K562 (cell line): ENCODE measurements at regions of chr7 and their contacts with region 1.

Region 1: GRCh38 chr7:104923010-104923421 is 91.0 kb upstream of the KMT2E start:
- DNase-seq: peak; percentile 54 to 93 (median 68)
- ATAC-seq: peak; percentile 98
- H3K4me3 ChIP-seq: no peak overlapping the region
- H3K27ac ChIP-seq: no peak overlapping the region
- H3K4me1 ChIP-seq: peaks cover 0 to 5% of the 10 kb centered on the region in 2 experiments; a peak in 2 of 5 replicates
- H3K27me3 ChIP-seq: no peaks in the 10 kb centered on the region
- CTCF ChIP-seq: peak; percentile 91 to 98 (median 95)
- EP300 ChIP-seq: peak; percentile 51
- POLR2A ChIP-seq: no peak
- RAD21 ChIP-seq: peak; percentile 94 to 99

Region 2: GRCh38 chr7:103573479-103574058 is 1349.4 kb before region 1 on chr7:
- CTCF ChIA-PET with region 1: no interaction called
- POLR2A ChIA-PET with region 1: no interaction called
- in situ Hi-C with region 1: loop called (anchors 25 kb)
- intact Hi-C with region 1: no loop called
- DNase-seq: peak; percentile 29 to 48 (median 34)
- ATAC-seq: peak; percentile 46; the same call in 1 of the 3 replicates
- H3K4me3 ChIP-seq: no peak overlapping the region
- H3K27ac ChIP-seq: no peak overlapping the region
- H3K4me1 ChIP-seq: no peaks in the 10 kb centered on the region
- H3K27me3 ChIP-seq: no peaks in the 10 kb centered on the region
- CTCF ChIP-seq: peak in 2 of 3 experiments; percentile 50 to 82; a peak in 3 of 6 replicates
- EP300 ChIP-seq: no peak
- POLR2A ChIP-seq: no peak
- RAD21 ChIP-seq: peak; percentile 90 to 95

Region 3: GRCh38 chr7:104341546-104341945 is 581.5 kb before region 1 on chr7:
- CTCF ChIA-PET with region 1: no interaction called
- POLR2A ChIA-PET with region 1: no interaction called
- in situ Hi-C with region 1: no loop called
- intact Hi-C with region 1: loop called (anchors 5 kb)
- DNase-seq: peak; percentile 10 to 44 (median 24)
- ATAC-seq: peak; percentile 85
- H3K4me3 ChIP-seq: no peak overlapping the region
- H3K27ac ChIP-seq: no peak overlapping the region
- H3K4me1 ChIP-seq: no peaks in the 10 kb centered on the region
- H3K27me3 ChIP-seq: peaks cover 0 to 2% of the 10 kb centered on the region in 2 experiments; a peak in 1 of 5 replicates
- CTCF ChIP-seq: peak; percentile 41 to 56 (median 47); a peak in 5 of 6 replicates
- EP300 ChIP-seq: no peak
- POLR2A ChIP-seq: no peak
- RAD21 ChIP-seq: peak in 1 of 2 experiments; percentile 58; a peak in 2 of 4 replicates

Region 4: GRCh38 chr7:104883718-104884452 is 39.1 kb before region 1 on chr7:
- CTCF ChIA-PET with region 1: interaction called, 16 read pairs
- POLR2A ChIA-PET with region 1: no interaction called
- in situ Hi-C with region 1: loop called (anchors 5 kb)
- intact Hi-C with region 1: loop called (anchors 1 kb)
- DNase-seq: peak; percentile 90 to 93 (median 91)
- ATAC-seq: peak; percentile 99
- H3K4me3 ChIP-seq: no peak overlapping the region
- H3K27ac ChIP-seq: peak overlapping the region; percentile 74
- H3K4me1 ChIP-seq: peaks cover 0 to 11% of the 10 kb centered on the region in 2 experiments; a peak in 3 of 5 replicates
- H3K27me3 ChIP-seq: no peaks in the 10 kb centered on the region
- CTCF ChIP-seq: peak; percentile 91 to 99 (median 91)
- EP300 ChIP-seq: peak; percentile 33
- POLR2A ChIP-seq: no peak
- RAD21 ChIP-seq: peak; percentile 67 to 78

Region 5: GRCh38 chr7:105046414-105046813 is 123.4 kb after region 1 on chr7:
- CTCF ChIA-PET with region 1: interaction called, 4 read pairs
- POLR2A ChIA-PET with region 1: no interaction called
- in situ Hi-C with region 1: no loop called
- intact Hi-C with region 1: loop called (anchors 1 kb)
- DNase-seq: no peak
- ATAC-seq: no peak
- H3K4me3 ChIP-seq: no peak overlapping the region
- H3K27ac ChIP-seq: no peak overlapping the region
- H3K4me1 ChIP-seq: peaks cover 0 to 6% of the 10 kb centered on the region in 2 experiments; a peak in 2 of 5 replicates
- H3K27me3 ChIP-seq: no peaks in the 10 kb centered on the region
- CTCF ChIP-seq: no peak
- EP300 ChIP-seq: no peak
- POLR2A ChIP-seq: no peak
- RAD21 ChIP-seq: no peak

Region 6: GRCh38 chr7:105336009-105336408 is 413.0 kb after region 1 on chr7:
- CTCF ChIA-PET with region 1: no interaction called
- POLR2A ChIA-PET with region 1: no interaction called
- in situ Hi-C with region 1: no loop called
- intact Hi-C with region 1: loop called (anchors 5 kb)
- DNase-seq: no peak
- ATAC-seq: no peak
- H3K4me3 ChIP-seq: no peak overlapping the region
- H3K27ac ChIP-seq: no peak overlapping the region
- H3K4me1 ChIP-seq: peaks cover 0 to 4% of the 10 kb centered on the region in 2 experiments; a peak in 1 of 5 replicates
- H3K27me3 ChIP-seq: no peaks in the 10 kb centered on the region
- CTCF ChIP-seq: peak in 1 of 3 experiments; percentile 59; a peak in 2 of 6 replicates
- EP300 ChIP-seq: no peak
- POLR2A ChIP-seq: no peak
- RAD21 ChIP-seq: peak; percentile 55 to 58

Region 7: DNA sequence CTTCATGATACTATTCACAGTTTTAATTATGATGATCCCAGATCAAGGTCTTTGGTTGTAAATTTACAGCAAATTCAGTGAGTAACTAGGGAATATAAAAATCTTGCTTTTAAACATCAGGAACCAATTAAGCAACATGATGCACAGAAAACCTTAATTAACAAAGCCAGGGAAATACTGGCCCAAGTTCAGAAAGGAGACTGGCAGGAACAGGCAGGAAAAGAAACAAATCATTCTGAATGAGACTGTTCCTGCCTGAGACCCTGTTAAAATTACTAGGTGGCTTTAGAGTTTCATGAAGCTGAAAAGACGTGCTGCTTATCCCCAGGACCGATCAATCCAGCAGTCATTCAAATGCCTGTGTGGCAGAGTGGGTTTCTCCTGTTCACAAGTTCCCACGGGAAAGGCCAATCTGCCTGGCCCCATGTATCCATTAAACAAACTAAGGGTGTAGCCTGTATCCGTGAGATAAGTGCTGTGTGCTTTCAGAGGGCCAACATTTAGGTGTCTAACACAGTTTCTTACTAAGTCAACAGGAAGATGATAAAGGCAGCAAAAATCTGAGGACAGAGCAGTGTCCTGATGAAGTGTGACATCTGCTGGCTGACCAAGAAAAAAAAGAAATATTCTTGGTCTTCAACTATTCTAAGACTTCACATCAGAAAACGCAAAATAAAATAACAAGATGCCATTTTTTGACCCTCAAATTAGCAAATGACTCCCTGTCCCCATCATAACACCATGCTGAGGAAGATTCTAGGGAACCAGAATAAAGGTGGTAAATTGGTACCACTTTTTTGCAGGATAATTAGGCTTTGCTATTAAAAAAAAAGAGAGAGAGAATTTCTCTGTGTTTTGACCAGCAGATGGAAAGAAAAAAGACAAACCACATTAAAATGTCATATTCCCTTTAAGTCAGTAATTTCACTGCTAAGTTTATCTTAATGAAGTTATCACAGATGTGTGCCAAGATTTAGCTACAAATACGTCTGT is 564.9 kb after region 1 on chr7:
- CTCF ChIA-PET with region 1: interaction called, 12 read pairs
- POLR2A ChIA-PET with region 1: no interaction called
- in situ Hi-C with region 1: no loop called
- intact Hi-C with region 1: loop called (anchors 1 kb)
- DNase-seq: peak; percentile 33 to 83 (median 62)
- ATAC-seq: peak; percentile 96
- H3K4me3 ChIP-seq: no peak overlapping the region
- H3K27ac ChIP-seq: peak overlapping the region; percentile 27; the same call in 2 of the 3 replicates
- H3K4me1 ChIP-seq: peaks cover 0 to 10% of the 10 kb centered on the region in 2 experiments; a peak in 2 of 5 replicates
- H3K27me3 ChIP-seq: no peaks in the 10 kb centered on the region
- CTCF ChIP-seq: peak; percentile 56 to 93 (median 77); a peak in 5 of 6 replicates
- EP300 ChIP-seq: peak; percentile 79
- POLR2A ChIP-seq: no peak
- RAD21 ChIP-seq: peak; percentile 89 to 93